Prostate gland (tissue), 2 donors: ENCODE measurements at regions of chr10 and their contacts with region 1.

Region 1: DNA sequence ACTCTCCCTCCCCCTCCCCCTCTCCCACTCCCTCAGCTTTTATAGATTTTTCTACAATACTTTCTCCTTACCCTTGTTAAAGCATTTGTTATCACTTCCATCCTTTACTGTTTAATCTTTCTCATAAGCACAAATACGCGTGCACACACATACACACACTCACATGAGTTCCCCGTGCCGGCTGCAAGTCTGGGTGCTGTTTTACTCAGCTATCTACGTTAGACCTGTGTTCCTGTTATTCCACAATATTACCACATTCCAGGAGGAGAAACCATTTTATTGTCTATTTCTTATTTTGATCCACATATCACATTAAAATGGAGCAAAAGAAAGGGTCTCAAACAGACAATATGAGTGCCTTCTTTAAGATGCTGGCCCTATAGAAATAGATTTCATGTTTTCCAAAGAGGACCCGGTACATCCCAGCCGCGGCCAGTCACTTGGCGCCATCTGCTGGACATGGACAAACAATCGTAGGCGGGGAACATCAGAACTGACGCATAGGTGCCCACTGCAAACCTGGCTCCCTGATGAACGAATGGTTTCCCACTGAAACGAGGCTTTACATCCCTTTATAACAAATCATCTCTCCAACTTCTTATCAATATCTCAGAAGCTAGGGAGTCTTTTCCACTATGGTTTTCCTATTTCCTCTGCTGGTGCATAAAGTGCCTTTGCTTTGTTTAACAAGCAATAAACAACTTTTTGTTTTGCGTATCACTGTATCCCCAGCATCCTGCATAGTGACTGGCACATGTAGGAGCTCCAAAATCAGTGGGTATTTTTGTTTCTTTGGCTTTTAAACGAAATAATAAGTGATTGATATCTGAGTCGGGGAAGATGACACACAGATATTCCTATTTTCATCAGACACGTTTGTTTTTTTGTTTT is 25.2 kb upstream of the OPTN start:
- DNase-seq: peak; percentile 63
- H3K4me3 ChIP-seq: no peak overlapping the region
- H3K27ac ChIP-seq: no peak overlapping the region
- H3K4me1 ChIP-seq: no peaks in the 10 kb centered on the region
- H3K27me3 ChIP-seq: no peaks in the 10 kb centered on the region
- CTCF ChIP-seq: peak; percentile 71 to 76 (median 74)
- POLR2A ChIP-seq: no peak

Region 2: GRCh38 chr10:12681252-12681651 is 393.6 kb before region 1 on chr10:
- intact Hi-C with region 1: no loop called
- DNase-seq: no peak
- H3K4me3 ChIP-seq: no peak overlapping the region
- H3K27ac ChIP-seq: no peak overlapping the region
- H3K4me1 ChIP-seq: no peaks in the 10 kb centered on the region
- H3K27me3 ChIP-seq: no peaks in the 10 kb centered on the region
- CTCF ChIP-seq: no peak
- POLR2A ChIP-seq: no peak

Region 3: DNA sequence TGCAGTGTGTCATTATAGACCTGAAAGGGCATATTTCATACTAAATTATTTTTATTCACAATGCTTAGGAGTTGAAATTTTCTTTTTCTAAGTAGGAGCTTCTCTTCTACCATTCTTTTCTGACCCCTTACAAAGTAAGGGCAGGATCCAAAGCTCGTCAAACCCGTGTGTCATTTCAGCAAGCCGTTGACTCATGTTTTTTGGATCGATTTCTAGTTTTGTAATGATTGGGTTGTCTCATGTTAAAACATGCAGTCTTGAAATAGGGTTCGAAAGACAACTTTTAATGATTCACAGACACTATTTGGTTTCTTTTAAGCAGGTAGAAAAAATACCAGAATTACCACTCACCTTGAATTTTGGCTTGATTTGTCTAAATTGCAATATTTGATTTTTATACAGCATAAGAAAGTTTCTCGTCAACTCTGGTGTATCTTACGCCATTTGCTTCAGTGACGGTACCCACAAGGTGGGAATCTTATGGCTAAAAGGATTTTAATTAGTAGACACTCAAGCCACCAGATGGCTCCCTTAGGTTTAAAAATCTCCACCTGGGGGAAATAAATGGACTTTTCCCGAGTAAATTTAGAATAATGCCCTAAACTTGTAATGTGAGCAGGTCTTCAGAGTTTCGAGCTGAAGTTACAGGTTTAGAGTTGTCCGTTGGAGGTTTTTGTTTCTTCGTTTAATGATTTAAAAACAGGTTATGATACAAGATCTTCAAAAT is 356.7 kb before region 1 on chr10:
- intact Hi-C with region 1: loop called (anchors 5 kb)
- DNase-seq: no peak
- H3K4me3 ChIP-seq: no peak overlapping the region
- H3K27ac ChIP-seq: no peak overlapping the region
- H3K4me1 ChIP-seq: peaks cover 7% of the 10 kb centered on the region
- H3K27me3 ChIP-seq: no peaks in the 10 kb centered on the region
- CTCF ChIP-seq: peak in 2 of 4 experiments; percentile 41 to 47
- POLR2A ChIP-seq: no peak

Region 4: DNA sequence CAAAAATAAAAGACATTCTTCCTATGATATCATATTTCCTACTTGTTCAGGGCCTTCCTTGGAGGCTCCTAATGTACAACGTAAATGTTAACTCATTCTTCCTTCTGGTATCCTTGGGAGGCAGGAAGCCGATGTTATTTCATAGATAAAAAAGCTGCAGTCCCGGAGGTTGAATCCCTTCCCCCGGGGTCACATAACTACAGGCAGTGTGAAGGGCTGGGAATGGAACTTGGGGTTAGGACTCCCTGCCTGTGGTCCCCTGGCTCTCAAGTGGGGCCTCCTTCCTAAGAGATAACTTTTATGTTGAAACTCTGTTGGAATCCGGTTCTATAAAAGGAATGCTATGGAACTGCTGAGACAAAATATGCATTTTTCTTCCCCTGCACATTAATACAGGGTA is 58.4 kb before region 1 on chr10:
- intact Hi-C with region 1: no loop called
- DNase-seq: no peak
- H3K4me3 ChIP-seq: no peak overlapping the region
- H3K27ac ChIP-seq: no peak overlapping the region
- H3K4me1 ChIP-seq: no peaks in the 10 kb centered on the region
- H3K27me3 ChIP-seq: no peaks in the 10 kb centered on the region
- CTCF ChIP-seq: no peak
- POLR2A ChIP-seq: no peak